ENCODE measurements at regions of chr3 and their contacts with region 1.

Region 1: GRCh38 chr3:160754855-160755747 is 930 bp upstream of the PPM1L start:
- DNase-seq: peak; percentile 94
- ATAC-seq: peak; percentile 95 to 97

Region 2: GRCh38 chr3:160796813-160797164 is 41.7 kb after region 1 on chr3:
- intact Hi-C with region 1: loop called in 1 of 2 experiments (anchors 5 kb)
- DNase-seq: no peak
- ATAC-seq: peak; percentile 48 to 58

Region 3: DNA sequence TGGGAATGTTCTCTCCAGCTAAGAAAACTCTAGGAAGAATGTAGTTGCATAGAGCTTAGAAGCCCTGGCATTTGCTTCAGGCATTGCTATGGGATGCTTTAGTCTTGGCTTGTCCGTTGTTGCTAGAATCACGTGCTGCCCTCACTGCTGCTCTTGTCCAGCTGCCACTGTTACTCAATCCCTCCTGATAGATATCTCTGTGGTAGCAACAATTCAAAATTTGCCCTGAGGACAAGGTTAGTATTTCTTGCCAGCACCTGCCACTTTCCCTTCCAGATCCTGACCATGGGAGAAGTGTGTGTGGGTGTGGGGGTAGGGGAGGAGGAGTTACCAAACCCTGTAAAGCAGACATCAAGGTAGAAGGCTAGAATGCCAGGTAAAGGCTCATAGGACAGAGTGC is 114.7 kb after region 1 on chr3:
- intact Hi-C with region 1: loop called in 1 of 2 experiments (anchors 5 kb)
- DNase-seq: peak; percentile 20
- ATAC-seq: peak; percentile 78 to 84

Region 4: DNA sequence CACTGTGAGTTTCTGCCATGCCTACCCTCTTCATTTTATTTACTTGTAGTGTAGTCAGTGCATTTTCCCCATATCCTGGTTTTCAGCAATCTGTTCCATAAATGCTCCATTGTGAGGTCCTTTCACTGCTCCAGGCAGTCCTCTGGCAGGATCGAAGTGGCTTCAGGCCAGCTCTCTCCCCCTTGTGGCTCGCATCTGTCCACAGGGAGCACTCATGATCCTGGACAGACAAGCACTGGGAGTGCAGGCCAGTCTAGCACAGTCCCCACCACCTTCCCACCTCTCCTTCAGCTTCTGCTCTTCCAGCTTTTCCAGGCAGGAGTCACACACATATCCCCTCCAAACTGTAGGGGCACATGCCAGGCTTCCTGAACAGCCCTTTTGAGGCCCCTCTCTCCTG is 174.5 kb after region 1 on chr3:
- intact Hi-C with region 1: loop called in 1 of 2 experiments (anchors 5 kb)
- DNase-seq: peak; percentile 50
- ATAC-seq: peak; percentile 85 to 88

Measured in left cardiac atrium (tissue), 4 donors.